ENCODE measurements at regions of chr17 and their contacts with region 1.

Region 1: DNA sequence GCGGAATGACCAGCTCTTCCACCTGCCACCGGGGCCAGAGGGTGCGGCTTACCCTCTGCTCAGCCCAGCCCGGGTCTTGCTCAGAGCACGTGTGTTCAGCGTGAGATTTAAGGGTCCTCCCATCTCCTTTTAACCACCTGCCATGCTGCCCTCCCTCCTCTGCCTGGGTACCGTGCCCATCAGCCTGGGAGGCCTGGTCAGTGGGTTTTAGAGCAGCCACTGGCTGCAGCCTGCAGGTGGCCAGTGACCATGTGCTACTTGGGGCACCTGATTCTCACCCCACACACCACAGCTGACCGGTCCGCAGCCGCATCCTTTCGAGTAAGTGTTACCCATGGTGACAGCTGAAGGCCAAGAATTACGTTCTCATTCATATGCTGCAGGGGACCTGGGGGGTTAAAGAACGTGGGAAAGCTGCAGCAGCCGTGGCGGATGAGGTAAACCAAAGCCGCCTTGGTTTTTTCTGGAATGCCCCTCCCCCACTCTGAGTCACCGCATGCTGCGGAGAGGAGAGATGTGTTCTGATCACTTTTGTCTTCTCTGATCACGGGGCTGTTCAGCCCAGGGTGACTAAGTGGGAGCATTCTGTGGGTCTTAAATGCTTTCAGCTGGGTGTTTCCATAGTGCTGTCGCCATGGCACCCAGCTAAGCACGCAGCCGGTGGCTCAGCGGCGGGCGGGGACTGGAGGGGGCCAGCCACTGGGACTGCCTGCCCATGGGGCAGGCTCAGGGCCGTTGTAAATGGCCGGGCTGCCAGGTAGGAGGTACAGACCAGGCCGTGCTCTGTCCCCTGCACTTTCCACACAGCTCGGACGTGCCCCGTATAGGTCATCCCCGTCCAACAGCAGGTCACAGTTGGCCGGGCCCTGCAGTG is 59.8 kb downstream of the BAIAP2 start:
- DNase-seq: no peak
- H3K4me3 ChIP-seq: no peak overlapping the region
- H3K27ac ChIP-seq: no peak overlapping the region
- H3K4me1 ChIP-seq: peaks cover 23% of the 10 kb centered on the region
- H3K27me3 ChIP-seq: no peaks in the 10 kb centered on the region
- CTCF ChIP-seq: no peak

Region 2: GRCh38 chr17:81027591-81028505 is 66.9 kb before region 1 on chr17:
- intact Hi-C with region 1: loop called (anchors 5 kb)
- DNase-seq: no peak
- H3K4me3 ChIP-seq: no peak overlapping the region
- H3K27ac ChIP-seq: no peak overlapping the region
- H3K4me1 ChIP-seq: peaks cover 40% of the 10 kb centered on the region
- H3K27me3 ChIP-seq: peaks cover 40% of the 10 kb centered on the region
- CTCF ChIP-seq: no peak

Region 3: DNA sequence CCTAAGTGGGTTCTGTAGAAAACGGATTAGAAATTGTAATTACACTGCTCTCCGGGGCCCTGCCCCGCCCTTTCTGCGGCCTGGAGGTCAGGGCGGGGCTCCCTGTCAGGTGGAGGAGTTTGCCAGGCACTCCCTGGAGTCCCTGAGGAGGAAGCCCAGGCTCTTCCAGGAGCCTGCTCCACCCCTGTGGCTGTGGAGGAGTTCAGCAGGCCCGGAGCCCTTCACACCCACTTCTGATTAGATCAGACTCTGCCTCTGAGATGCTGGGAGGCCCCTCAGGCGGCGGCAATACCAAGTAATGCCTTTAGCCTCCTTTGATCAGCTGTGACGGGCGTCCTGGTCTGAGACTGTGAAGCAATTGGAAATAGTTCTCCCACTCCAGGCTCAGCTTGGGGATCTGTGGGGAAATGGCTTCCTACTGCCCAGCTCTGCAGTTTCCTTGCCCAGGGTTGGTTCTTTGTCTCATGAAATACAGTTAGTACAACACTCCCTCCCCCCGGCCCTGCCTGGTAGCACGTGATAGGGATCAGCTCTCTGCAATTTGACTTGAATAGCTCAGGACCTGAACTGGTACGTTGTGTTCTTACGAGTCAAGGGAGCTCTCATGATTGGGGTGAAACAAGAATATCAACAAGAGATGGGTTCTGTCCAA is 37.5 kb before region 1 on chr17:
- intact Hi-C with region 1: no loop called
- DNase-seq: peak; percentile 69
- H3K4me3 ChIP-seq: peak overlapping the region; percentile 30
- H3K27ac ChIP-seq: peak overlapping the region; percentile 96
- H3K4me1 ChIP-seq: peaks cover 56% of the 10 kb centered on the region
- H3K27me3 ChIP-seq: no peaks in the 10 kb centered on the region
- CTCF ChIP-seq: no peak

Measured in left ventricle myocardium inferior (tissue), 1 donor.